Activated T-helper 1 cell treated with anti-CD3 and anti-CD28 coated beads, Interleukin-12 subunit alpha, Interleukin-12 subunit beta, Interleukin-2, Interleukin-4 antibody, amounts not matched to agents 30 ng/mL and 10 ng/mL and 1 ng/mL, durations not matched to agents 14 hours and 24 hours and 36 hours (primary cell): ENCODE measurements at regions of chr9 and their contacts with region 1.

Region 1: DNA sequence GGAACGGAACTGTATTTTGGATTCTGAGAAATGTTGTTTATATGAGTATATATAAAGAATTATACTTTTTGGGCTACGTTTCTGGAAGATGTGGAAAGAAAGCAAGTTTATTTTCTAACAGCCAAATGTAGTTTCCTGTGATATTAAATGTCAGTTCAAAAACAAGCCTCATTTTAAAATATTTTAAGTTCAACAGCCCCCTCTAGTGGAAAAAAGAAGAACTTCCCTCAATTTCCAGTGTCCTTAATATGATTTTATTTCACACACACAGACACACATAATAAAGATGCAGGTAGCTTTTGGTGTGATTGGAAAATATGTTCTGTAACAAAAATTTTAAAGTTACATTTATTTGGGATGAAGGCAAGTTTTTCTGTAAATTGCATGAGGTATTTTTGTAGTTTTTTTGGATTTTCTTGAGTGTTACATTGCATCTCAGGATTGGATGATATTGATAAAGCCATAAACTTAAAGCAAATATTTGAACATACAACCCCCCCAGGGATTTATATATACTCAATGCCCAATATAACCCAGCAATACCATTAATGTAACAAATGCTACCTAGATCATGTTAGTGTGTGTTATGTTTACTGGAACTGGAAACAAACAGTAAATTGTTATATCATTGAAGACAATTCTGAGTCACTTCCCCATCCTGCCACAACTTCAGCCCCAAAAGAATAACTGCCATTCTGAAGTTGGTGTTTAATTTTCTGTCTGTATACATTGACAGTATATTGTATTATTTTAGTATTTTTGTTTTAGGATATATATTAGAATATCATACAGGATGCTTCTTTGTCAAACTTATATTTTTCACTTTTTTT is 54.0 kb downstream of the CCDC171 start:
- DNase-seq: no peak
- H3K4me3 Mint-ChIP-seq: no peak overlapping the region
- H3K27ac Mint-ChIP-seq: no peak overlapping the region
- H3K4me1 Mint-ChIP-seq: peaks cover 7% of the 10 kb centered on the region
- H3K27me3 Mint-ChIP-seq: no peaks in the 10 kb centered on the region

Region 2: GRCh38 chr9:15104826-15105420 is 501.9 kb before region 1 on chr9:
- intact Hi-C with region 1: loop called (anchors 2 kb)
- DNase-seq: peak; percentile 17
- H3K4me3 Mint-ChIP-seq: no peak overlapping the region
- H3K27ac Mint-ChIP-seq: no peak overlapping the region
- H3K4me1 Mint-ChIP-seq: no peaks in the 10 kb centered on the region
- H3K27me3 Mint-ChIP-seq: peaks cover 21% of the 10 kb centered on the region

Region 3: GRCh38 chr9:15357050-15357653 is 249.7 kb before region 1 on chr9:
- intact Hi-C with region 1: loop called (anchors 10 kb)
- DNase-seq: peak; percentile 11
- H3K4me3 Mint-ChIP-seq: no peak overlapping the region
- H3K27ac Mint-ChIP-seq: no peak overlapping the region
- H3K4me1 Mint-ChIP-seq: peaks cover 16% of the 10 kb centered on the region
- H3K27me3 Mint-ChIP-seq: peaks cover 2% of the 10 kb centered on the region

Region 4: DNA sequence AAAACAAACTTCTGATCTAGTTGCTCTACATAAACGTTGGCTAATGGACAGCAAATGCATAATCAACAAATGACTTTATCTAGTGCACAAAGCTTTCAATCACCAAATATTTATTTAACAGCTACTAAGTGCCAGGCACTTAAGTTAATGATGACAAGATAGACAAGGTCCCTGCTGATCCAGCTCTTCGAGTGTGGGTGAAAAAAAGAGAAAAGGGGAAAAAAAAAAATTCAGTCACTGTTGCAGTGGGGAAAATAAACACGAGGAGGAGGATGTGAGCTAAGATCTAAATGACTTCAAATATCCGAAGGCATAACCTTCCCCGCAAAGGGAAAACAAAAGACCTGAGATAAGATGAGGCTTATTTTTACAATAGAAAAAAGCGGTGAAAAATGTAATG is 105.7 kb before region 1 on chr9:
- intact Hi-C with region 1: loop called (anchors 1 kb)
- DNase-seq: no peak
- H3K4me3 Mint-ChIP-seq: no peak overlapping the region
- H3K27ac Mint-ChIP-seq: peak overlapping the region; percentile 25
- H3K4me1 Mint-ChIP-seq: peaks cover 46% of the 10 kb centered on the region
- H3K27me3 Mint-ChIP-seq: no peaks in the 10 kb centered on the region

Region 5: DNA sequence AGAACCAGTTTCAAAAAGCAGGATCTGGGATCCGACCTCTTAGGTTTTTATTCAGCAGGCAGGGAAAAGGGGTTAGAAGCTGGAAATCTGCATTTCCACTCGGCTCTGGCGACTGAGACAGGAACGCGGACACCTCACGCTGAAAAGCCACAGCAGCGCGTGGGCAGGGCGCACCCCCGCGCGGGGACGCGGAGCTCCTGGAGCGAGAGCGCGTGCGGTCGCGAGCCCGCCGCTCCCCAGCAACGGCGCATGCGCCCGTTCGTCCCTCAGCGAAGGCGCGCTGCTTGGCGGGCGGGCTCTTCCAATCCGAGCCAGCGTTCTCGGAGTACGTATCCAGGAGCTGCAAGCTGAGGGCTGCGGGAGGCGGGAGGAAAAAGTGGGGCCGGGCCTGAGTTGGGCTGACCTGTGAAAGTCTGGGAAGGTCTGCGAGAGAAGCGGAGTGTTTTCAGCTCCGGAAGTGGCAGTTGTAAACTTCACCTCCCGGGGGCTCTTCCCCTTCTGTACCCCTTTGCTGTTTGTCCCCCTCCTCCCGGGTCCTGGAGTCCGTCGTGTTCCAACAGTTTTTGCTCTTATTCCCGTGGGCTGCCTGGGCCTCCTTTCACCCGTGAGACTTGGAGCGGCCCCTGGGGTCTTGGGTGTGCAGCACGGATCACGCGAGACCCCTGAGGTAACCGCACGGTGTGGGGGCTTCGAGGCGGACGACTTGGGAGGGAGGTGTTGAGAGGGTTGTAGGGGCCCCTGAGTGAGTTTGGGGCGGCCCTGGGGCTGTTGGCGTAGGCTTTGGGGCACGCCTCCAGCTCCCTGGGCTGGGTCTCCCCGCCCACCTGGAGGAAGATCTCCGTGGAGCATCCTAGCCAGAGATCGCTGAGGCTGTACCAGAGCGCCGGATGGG is 54.0 kb before region 1 on chr9 and contains the start of gene CCDC171:
- intact Hi-C with region 1: loop called (anchors 1 kb)
- DNase-seq: peak; percentile 84
- H3K4me3 Mint-ChIP-seq: peak within 1 kb of the TSS; percentile 87
- H3K27ac Mint-ChIP-seq: peak within 1 kb of the TSS; percentile 75
- H3K4me1 Mint-ChIP-seq: peaks cover 20% of the 10 kb centered on the region
- H3K27me3 Mint-ChIP-seq: peaks cover 25% of the 10 kb centered on the region
- total RNA-seq, gene CCDC171: 1.4 and 2.0 TPM in 2 replicates